PC-3 (cell line): ENCODE measurements at regions of chr5 and their contacts with region 1.

Region 1: DNA sequence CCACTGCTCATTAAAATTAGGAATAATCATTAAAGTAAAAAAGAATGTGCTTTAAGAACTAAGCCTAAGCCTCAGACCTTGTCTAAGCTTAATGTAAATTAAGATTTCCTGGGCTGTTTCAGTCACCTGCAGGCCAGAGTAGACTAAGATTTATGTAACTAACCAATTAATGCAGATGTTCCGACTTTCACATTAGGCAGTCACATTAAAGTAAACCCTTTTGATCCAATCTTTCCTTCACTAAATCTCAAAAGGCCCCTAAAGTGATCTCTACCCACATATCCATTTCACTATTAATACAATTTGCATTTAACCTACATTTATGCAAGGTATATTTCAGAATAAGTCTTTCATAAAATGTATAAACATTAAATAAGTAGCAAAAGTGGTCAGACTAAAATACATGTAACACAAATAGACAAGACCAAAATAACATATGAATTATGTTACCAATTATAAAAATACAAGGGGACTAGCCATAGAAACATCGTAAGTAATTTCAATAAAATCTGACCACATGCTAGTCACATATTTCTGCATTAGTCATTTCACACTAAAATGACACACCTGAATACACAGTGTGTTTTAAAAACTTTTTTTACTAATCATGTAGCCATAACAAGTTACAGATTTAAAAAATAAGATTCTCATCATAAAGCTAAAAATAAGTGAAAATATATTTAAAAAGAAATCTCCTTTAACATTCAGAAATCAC is 7.7 kb downstream of the NR3C1 start:
- DNase-seq: peak; percentile 65
- ATAC-seq: peak; percentile 82
- H3K4me3 ChIP-seq: peak overlapping the region; percentile 92
- H3K27ac ChIP-seq: peak overlapping the region; percentile 48
- H3K4me1 ChIP-seq: peaks cover 64% of the 10 kb centered on the region
- H3K27me3 ChIP-seq: no peaks in the 10 kb centered on the region
- CTCF ChIP-seq: no peak

Region 2: DNA sequence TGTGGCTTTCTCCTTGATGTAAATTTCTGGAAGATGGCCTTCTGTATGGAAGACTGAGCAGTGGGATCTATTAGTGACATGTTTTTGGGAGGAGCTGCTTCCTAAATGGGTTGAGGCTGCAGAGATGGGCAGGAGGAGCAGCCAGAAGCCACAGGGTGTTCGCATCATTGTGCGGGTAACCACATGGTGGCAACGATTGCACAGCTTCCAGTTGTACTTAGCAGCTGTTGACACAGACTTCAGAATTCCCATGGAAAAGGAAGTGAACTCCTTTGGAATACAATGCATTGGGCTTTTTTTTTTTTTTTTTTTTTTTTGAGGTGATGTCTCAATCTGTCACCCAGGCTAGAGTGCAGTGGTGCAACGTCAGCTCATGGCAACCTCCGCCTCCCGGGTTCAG is 289.6 kb before region 1 on chr5:
- CTCF ChIA-PET with region 1: no interaction called
- POLR2A ChIA-PET with region 1: no interaction called
- intact Hi-C with region 1: loop called (anchors 10 kb)
- DNase-seq: peak; percentile 52
- ATAC-seq: peak; percentile 79
- H3K4me3 ChIP-seq: no peak overlapping the region
- H3K27ac ChIP-seq: no peak overlapping the region
- H3K4me1 ChIP-seq: no peaks in the 10 kb centered on the region
- H3K27me3 ChIP-seq: no peaks in the 10 kb centered on the region
- CTCF ChIP-seq: peak; percentile 35; the same call in 1 of the 2 replicates

Region 3: DNA sequence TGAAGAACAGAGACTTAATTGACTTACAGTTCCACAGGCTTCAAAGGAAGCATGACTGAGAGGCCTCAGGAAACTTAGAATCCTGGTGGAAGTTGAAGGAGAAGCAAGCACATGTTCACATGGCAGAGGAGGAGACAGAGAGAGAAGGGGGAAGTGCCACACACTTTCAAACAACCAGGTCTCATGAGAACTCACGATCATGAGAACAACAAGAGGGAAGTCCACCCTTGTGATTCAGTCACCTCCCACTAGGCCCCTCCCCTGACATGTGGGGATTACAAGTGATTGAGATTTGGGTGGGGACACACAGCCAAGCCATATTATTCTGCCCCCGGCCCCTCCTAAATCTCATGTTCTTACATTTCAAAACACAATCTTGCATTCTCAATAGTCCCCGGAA is 11.8 kb before region 1 on chr5:
- CTCF ChIA-PET with region 1: no interaction called
- POLR2A ChIA-PET with region 1: no interaction called
- intact Hi-C with region 1: no loop called
- DNase-seq: no peak
- ATAC-seq: no peak
- H3K4me3 ChIP-seq: no peak overlapping the region
- H3K27ac ChIP-seq: no peak overlapping the region
- H3K4me1 ChIP-seq: no peaks in the 10 kb centered on the region
- H3K27me3 ChIP-seq: no peaks in the 10 kb centered on the region
- CTCF ChIP-seq: no peak